ENCODE measurements at regions of chrX and their contacts with region 1.

Region 1: DNA sequence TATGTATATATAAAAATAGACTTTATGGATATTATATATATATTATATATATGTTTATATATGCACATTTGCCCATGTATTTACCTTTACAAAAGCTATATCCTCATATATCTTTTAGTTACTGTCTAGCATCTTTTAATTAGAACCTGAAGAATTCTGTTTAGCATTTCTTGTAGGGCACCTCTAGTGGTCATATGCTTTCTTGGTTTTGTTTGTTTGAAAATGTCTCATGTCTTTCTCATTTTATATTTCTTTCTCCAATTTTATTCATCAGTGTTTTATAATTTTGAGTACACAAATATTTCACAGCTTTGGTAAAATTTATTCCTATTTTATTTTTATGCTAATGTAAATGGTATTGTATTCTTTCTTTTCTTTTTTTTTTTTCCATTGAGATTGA is 70.3 kb upstream of the SPIN4 start:
- DNase-seq: no peak
- H3K4me3 Mint-ChIP-seq: no peak overlapping the region
- H3K27ac Mint-ChIP-seq: no peak overlapping the region
- H3K4me1 Mint-ChIP-seq: peaks cover 11% of the 10 kb centered on the region
- H3K27me3 Mint-ChIP-seq: no peaks in the 10 kb centered on the region
- CTCF ChIP-seq: no peak

Region 2: GRCh38 chrX:63560601-63561218 is 139.3 kb after region 1 on chrX:
- CTCF ChIA-PET with region 1: no interaction called
- intact Hi-C with region 1: loop called (anchors 10 kb)
- DNase-seq: peak; percentile 58
- H3K4me3 Mint-ChIP-seq: peak overlapping the region; percentile 97
- H3K27ac Mint-ChIP-seq: peak overlapping the region; percentile 86
- H3K4me1 Mint-ChIP-seq: no peaks in the 10 kb centered on the region
- H3K27me3 Mint-ChIP-seq: no peaks in the 10 kb centered on the region
- CTCF ChIP-seq: no peak

Region 3: GRCh38 chrX:63702556-63702955 is 281.1 kb after region 1 on chrX:
- CTCF ChIA-PET with region 1: no interaction called
- intact Hi-C with region 1: no loop called
- DNase-seq: no peak
- H3K4me3 Mint-ChIP-seq: no peak overlapping the region
- H3K27ac Mint-ChIP-seq: no peak overlapping the region
- H3K4me1 Mint-ChIP-seq: no peaks in the 10 kb centered on the region
- H3K27me3 Mint-ChIP-seq: no peaks in the 10 kb centered on the region
- CTCF ChIP-seq: no peak